PC-9 (cell line): ENCODE measurements at regions of chr15 and their contacts with region 1.

Region 1: DNA sequence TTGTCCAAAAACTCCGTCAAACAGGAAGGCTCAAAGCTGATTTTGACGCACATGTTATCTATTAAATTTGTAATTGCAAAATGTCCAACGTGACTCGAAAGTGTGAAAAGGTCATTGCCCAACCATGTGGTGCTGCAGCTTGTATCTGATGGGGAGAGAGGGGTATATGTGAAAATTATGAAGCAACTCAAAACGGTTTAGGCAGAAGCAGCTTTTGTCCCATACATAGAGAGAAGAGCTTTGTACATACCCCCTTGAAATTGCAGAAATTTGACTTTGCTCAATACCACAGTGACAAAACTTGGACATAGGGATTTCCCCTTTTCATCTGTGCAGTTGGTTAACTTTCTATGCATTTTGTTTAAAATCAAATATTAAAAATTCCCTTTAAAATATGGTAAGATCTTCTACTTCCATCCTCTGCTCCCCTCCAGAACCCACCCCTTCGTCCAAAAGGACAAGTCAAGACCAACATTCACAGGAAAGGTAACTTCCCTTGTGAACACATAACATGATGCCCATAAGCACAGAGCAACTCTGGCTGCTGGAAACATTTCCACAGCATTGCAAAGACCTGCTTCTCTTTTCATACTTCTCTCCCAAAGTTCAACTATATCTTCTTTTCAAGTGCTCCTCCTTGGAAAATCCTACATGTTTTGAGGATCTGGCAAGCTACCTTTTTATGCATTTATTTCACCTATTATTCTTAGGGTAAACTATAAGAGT is 253.7 kb upstream of the THBS1 start:
- DNase-seq: no peak
- H3K4me3 ChIP-seq: no peak overlapping the region
- H3K27ac ChIP-seq: no peak overlapping the region
- H3K4me1 ChIP-seq: no peaks in the 10 kb centered on the region
- H3K27me3 ChIP-seq: no peaks in the 10 kb centered on the region
- CTCF ChIP-seq: no peak

Region 2: GRCh38 chr15:38252481-38253412 is 1074.4 kb before region 1 on chr15 and contains the start of gene SPRED1:
- CTCF ChIA-PET with region 1: no interaction called
- POLR2A ChIA-PET with region 1: interaction called, 11 read pairs
- intact Hi-C with region 1: no loop called
- DNase-seq: peak in 1 of 2 experiments; percentile 60
- H3K4me3 ChIP-seq: peak within 1 kb of the TSS; percentile 80
- H3K27ac ChIP-seq: peak within 1 kb of the TSS; percentile 80
- H3K4me1 ChIP-seq: peaks cover 28% of the 10 kb centered on the region
- H3K27me3 ChIP-seq: no peaks in the 10 kb centered on the region
- CTCF ChIP-seq: no peak
- total RNA-seq, gene SPRED1: 16.5 and 21.3 TPM in 2 replicates

Region 3: GRCh38 chr15:39202641-39203040 is 124.5 kb before region 1 on chr15:
- CTCF ChIA-PET with region 1: no interaction called
- POLR2A ChIA-PET with region 1: no interaction called
- intact Hi-C with region 1: no loop called
- DNase-seq: peak in 1 of 2 experiments; percentile 62
- H3K4me3 ChIP-seq: no peak overlapping the region
- H3K27ac ChIP-seq: peak overlapping the region; percentile 55; the same call in 1 of the 2 replicates
- H3K4me1 ChIP-seq: peaks cover 14% of the 10 kb centered on the region
- H3K27me3 ChIP-seq: no peaks in the 10 kb centered on the region
- CTCF ChIP-seq: no peak